OCI-LY7 (cell line): ENCODE measurements at regions of chr13 and their contacts with region 1.

Region 1: DNA sequence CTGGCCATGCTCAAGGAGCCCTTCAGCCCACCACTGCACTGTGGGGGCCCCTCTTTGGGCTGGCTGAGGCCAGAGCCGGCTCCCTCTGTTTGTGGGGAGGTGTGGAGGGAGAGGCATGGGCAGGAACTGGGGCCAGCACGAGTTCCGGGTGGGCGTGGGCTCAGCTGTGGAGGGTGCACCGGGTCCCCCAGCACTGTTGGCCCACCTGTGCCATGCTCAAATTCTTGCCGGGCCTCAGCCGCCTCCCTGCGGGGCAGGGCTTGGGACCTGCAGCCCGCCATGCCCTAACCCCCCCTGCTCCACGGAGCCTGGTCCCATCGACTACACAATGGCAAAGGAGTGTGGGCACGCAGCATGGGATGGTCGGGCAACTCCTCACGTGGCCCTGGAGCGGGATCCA is 38.8 kb upstream of the TNFRSF19 start:
- DNase-seq: no peak
- H3K4me3 ChIP-seq: no peak overlapping the region
- H3K27ac ChIP-seq: no peak overlapping the region
- H3K4me1 ChIP-seq: no peaks in the 10 kb centered on the region
- CTCF ChIP-seq: no peak

Region 2: DNA sequence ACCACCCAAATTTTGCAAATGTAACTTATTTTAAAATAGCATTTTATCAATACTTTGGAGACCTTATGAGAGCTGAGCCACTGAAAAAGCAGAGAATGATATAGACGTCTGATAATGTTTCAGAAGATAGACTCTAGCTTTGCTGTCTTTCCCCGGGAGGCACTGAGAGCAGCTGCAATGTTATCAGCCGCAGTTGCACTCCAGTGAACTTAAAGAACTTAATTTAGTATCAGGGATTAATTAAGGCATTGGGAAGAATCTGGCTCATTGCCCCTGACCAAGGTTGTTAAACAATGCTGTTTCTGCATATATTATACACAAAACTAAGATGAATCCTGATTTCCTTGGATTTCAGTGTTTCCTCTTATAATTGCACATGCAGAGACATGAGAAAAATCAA is 426.4 kb before region 1 on chr13:
- CTCF ChIA-PET with region 1: no interaction called
- POLR2A ChIA-PET with region 1: no interaction called
- intact Hi-C with region 1: no loop called
- DNase-seq: no peak
- H3K4me3 ChIP-seq: no peak overlapping the region
- H3K27ac ChIP-seq: no peak overlapping the region
- H3K4me1 ChIP-seq: no peaks in the 10 kb centered on the region
- CTCF ChIP-seq: no peak

Region 3: DNA sequence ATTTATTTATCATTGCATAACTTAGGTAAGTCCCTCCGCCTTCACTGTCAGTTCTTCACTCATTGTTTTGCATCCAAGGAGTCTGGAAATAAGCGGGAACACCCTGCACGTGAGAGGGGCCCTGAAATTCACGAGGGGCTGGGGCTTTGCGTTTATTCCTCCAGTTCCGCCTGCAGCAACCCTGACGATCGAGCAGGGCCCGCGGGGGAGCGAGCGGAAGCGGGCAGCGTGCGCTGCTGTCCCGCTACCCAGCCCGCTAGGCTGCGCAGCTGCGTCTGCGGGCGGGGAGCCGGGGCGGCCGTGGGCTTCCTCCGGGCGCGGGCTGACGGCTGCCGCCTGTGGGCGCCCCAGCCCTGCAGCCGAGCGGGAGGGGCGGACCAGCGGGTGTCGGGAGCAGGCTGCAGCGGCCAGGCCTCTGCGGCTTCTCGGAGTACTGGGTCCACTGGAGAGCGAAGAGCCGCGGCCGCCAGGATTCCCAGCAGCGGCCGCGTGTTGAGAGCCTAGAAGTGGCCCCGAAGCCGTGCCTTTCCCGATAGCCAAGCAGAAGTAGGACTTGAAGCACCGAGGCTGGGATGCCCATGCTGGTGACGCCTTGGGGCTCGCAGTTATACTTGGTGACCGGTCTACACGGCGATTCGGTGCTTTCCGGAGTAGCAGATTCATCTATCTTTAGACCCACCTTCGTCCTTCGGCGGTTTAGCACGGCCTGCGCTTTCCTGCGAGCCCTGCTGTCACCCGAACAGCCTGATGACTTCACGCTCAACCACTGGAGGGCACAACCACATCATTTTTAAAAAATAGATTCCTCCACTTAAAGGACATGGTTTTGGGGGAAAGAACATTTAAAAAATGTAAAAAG is 65.1 kb before region 1 on chr13:
- CTCF ChIA-PET with region 1: no interaction called
- POLR2A ChIA-PET with region 1: no interaction called
- intact Hi-C with region 1: loop called (anchors 10 kb)
- DNase-seq: peak; percentile 13
- H3K4me3 ChIP-seq: no peak overlapping the region
- H3K27ac ChIP-seq: no peak overlapping the region
- H3K4me1 ChIP-seq: no peaks in the 10 kb centered on the region
- CTCF ChIP-seq: peak; percentile 54

Region 4: GRCh38 chr13:23510979-23511735 is 20.3 kb before region 1 on chr13:
- CTCF ChIA-PET with region 1: no interaction called
- POLR2A ChIA-PET with region 1: no interaction called
- intact Hi-C with region 1: no loop called
- DNase-seq: peak; percentile 16
- H3K4me3 ChIP-seq: no peak overlapping the region
- H3K27ac ChIP-seq: no peak overlapping the region
- H3K4me1 ChIP-seq: no peaks in the 10 kb centered on the region
- CTCF ChIP-seq: peak; percentile 53